Activated CD4-positive, alpha-beta memory T cell treated with anti-CD3 and anti-CD28 coated beads, Interleukin-2, amount 10 ng/mL, durations not matched to agents 7 days and 5 days (primary cell): ENCODE measurements at regions of chr10 and their contacts with region 1.

Region 1: GRCh38 chr10:48656241-48656913 is 28.3 kb upstream of the WDFY4 start:
- DNase-seq: peak; percentile 93
- H3K4me3 Mint-ChIP-seq: peak overlapping the region; percentile 58
- H3K27ac Mint-ChIP-seq: no peak overlapping the region
- H3K4me1 Mint-ChIP-seq: peaks cover 18% of the 10 kb centered on the region
- H3K27me3 Mint-ChIP-seq: peaks cover 25% of the 10 kb centered on the region

Region 2: GRCh38 chr10:48363617-48364355 is 292.6 kb before region 1 on chr10:
- CTCF ChIA-PET with region 1: interaction called, 41 read pairs
- POLR2A ChIA-PET with region 1: interaction called, 4 read pairs
- DNase-seq: peak; percentile 34
- H3K4me3 Mint-ChIP-seq: no peak overlapping the region
- H3K27ac Mint-ChIP-seq: no peak overlapping the region
- H3K4me1 Mint-ChIP-seq: peaks cover 5% of the 10 kb centered on the region
- H3K27me3 Mint-ChIP-seq: no peaks in the 10 kb centered on the region

Region 3: GRCh38 chr10:48608279-48608681 is 48.1 kb before region 1 on chr10:
- CTCF ChIA-PET with region 1: interaction called, 125 read pairs
- POLR2A ChIA-PET with region 1: interaction called, 8 read pairs
- DNase-seq: peak; percentile 51
- H3K4me3 Mint-ChIP-seq: no peak overlapping the region
- H3K27ac Mint-ChIP-seq: no peak overlapping the region
- H3K4me1 Mint-ChIP-seq: peaks cover 9% of the 10 kb centered on the region
- H3K27me3 Mint-ChIP-seq: peaks cover 37% of the 10 kb centered on the region

Region 4: GRCh38 chr10:48623607-48624132 is 32.7 kb before region 1 on chr10:
- CTCF ChIA-PET with region 1: interaction called, 26 read pairs
- POLR2A ChIA-PET with region 1: no interaction called
- DNase-seq: no peak
- H3K4me3 Mint-ChIP-seq: no peak overlapping the region
- H3K27ac Mint-ChIP-seq: no peak overlapping the region
- H3K4me1 Mint-ChIP-seq: no peaks in the 10 kb centered on the region
- H3K27me3 Mint-ChIP-seq: peaks cover 19% of the 10 kb centered on the region

Region 5: GRCh38 chr10:48639632-48640031 is 16.7 kb before region 1 on chr10:
- CTCF ChIA-PET with region 1: interaction called, 42 read pairs
- POLR2A ChIA-PET with region 1: no interaction called
- DNase-seq: no peak
- H3K4me3 Mint-ChIP-seq: no peak overlapping the region
- H3K27ac Mint-ChIP-seq: no peak overlapping the region
- H3K4me1 Mint-ChIP-seq: peaks cover 9% of the 10 kb centered on the region
- H3K27me3 Mint-ChIP-seq: peaks cover 29% of the 10 kb centered on the region

Region 6: DNA sequence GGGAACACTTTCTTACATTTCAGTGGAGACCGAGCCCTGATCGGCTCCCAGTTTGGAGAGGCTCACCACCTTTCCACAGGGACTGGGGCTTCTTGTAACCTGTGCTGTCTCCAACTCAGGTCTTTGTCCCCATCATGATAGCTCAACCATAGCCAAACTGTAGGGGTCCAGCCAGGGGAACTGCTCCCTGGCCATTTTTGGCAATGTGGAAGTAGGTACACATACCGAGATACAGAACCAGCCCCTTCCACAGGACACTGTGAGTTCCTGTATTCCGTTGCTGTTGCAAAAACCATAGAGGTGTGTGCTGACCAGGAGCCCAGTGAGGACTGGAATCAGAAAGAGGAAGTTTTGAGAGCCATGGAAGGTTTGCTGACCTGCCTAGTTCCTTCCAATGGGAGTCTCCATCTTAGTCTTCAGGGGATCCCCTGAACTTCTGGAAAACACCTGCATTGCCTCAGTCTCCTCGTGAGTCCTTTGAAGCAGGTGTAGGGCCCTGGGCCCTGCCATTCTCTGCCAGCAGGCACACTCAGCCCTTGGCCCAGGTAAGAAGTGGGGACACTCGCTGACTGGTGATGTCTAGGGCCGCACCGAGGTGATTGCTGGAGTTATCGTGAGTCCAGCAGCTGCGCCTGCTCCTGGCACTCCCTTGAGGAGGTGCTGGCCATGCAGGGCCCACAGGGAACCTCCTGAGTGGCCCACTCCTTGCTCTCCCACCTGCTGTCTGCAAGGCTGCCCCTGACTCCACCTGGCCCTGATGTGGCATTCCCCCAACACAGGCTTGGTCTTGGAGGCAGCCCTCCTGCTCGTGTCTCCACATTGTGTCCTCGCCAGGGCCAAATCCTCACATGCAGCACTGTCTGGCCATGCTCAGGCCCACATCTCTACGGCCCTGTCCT is 39.5 kb after region 1 on chr10:
- CTCF ChIA-PET with region 1: no interaction called
- POLR2A ChIA-PET with region 1: no interaction called
- DNase-seq: no peak
- H3K4me3 Mint-ChIP-seq: no peak overlapping the region
- H3K27ac Mint-ChIP-seq: no peak overlapping the region
- H3K4me1 Mint-ChIP-seq: no peaks in the 10 kb centered on the region
- H3K27me3 Mint-ChIP-seq: no peaks in the 10 kb centered on the region

Region 7: DNA sequence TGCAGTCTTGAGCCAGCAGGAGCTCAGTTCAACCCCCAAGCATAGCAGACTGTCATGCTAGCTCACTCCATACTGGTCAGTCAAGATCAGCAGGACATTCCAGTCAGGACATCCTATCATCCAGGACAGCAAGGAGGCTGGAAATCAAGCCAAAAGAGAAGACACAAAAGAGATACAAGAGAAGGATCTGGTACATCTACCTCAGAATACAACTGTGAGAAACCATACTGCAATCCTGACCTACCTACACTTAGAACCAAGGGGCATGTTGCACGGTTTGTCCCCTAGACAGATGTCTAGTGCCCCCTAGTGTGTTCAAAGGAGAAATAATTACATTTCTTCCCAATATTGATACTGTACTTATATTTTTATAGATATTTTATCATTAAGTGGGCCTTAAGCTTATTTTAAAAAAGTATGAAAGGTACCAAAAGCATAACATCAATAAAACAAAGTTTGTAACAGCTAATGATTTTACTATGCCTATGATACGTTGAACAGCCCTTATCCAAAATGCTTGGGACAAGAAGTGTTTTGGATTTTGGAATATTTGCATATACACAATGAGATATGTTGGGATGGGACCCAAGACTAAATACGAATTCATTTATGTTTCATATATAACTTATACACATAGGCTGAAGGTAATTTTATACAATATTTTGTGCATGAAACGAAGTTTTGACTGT is 855.9 kb after region 1 on chr10:
- CTCF ChIA-PET with region 1: interaction called, 24 read pairs
- POLR2A ChIA-PET with region 1: no interaction called
- DNase-seq: no peak
- H3K4me3 Mint-ChIP-seq: no peak overlapping the region
- H3K27ac Mint-ChIP-seq: no peak overlapping the region
- H3K4me1 Mint-ChIP-seq: peaks cover 17% of the 10 kb centered on the region
- H3K27me3 Mint-ChIP-seq: no peaks in the 10 kb centered on the region